Dorsolateral prefrontal cortex (tissue), 120 donors: ENCODE measurements at regions of chr17 and their contacts with region 1.

Region 1: DNA sequence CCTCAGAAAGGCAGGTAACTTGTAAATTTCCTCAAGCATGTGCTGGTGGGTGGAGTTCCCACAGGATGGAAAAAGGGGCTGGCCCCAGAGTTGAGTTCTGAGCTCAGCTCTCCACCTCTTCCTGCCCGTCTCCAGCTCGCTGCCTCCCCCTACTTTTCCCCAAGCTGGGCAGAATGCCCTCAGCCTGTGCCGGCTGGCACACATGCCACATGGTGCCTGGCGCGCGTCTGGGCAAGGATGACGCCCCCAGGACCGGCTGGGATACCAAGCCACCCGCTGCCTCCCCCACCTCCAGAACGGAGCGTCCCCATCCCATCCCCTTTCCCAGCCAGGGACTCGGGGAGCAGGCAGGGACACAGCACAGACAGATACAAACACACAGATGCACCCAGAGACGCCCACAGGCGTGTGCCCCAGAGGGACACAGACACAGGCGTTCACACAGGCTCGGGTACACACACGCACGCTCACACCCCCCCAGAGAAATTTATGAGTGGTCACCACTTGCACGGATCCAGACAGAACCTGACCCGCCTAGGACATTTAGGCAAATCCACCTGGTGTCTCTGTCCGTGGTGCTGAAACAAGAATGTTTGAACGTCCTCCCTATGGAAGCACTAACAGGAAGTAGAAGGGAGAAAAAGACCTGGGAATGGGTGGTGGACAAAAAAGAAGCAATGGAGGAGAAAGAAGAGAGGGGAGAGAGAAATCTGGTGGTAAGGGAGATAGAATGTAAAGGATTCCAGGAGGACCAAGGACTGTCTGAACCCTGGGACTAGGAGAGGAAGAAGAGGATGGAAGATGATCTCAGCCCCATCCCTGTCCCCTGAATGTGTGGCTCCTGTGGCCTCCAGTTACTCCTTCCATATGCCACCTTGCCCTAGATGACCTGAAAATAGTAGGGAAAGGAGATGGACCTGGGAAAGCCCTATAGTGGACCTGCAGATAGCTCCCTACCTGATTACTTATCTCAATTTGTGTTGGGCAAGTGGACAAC is 15.5 kb downstream of the NEUROD2 start:
- DNase-seq: peak in 8 of 10 donors; percentile 61 to 83 (median 76)
- H3K4me3 ChIP-seq: no peak overlapping the region
- H3K27ac ChIP-seq: peak overlapping the region in 23 of 59 donors; percentile 7 to 82 (median 38)
- H3K27me3 ChIP-seq: peaks cover 0 to 35% (median 22%) of the 10 kb centered on the region in 45 donors
- CTCF ChIP-seq: no peak

Region 2: DNA sequence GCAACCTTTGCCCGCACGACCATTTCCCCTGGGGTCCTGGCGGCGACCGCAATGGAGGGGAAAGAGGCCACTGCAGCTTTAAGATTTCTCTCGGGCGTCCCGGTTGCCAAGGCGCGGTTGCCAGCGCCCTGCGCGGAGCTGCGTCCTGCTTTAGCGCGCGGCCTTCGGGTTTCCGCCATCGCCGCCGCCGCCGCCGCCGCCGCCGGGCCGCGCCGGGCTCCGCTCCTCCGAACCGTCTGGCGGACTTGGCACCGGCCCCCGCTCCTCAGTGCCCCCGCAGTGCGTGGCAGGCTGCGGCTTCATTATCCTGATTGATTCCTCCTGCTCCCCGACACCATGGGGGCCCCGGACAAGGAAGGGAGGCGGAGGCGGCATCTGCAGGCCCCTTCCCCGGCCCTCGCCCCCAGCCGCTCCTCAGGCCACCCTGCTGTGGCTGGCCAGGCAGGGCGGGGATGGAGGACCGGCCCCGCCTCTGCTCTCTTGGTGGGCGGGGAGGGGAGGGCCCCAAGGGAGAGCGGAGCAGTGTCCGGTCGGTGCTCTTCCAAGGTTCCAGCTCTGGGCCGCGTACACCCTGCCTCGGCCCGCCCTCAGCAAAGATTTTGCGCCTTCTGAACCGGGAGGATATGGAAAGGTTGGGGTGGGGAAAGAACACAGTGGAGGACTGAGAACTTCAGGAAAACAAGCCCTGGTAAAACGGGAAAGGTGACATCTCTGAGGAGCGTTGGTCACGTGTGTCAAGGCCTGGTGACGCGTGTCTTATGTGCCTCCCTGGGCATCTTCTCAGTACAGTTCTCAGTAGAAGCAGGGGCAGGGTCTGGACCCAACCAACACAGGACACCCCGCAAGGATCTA is 18.6 kb before region 1 on chr17:
- intact Hi-C with region 1: loop called in 1 of 2 experiments (anchors 1 kb)
- DNase-seq: peak in 8 of 10 donors; percentile 31 to 79 (median 67)
- H3K4me3 ChIP-seq: peak overlapping the region; percentile 51 to 82 (median 69)
- H3K27ac ChIP-seq: peak overlapping the region in 57 of 59 donors; percentile 41 to 94 (median 84)
- H3K27me3 ChIP-seq: no peaks in the 10 kb centered on the region
- CTCF ChIP-seq: peak in 2 of 56 donors; percentile 12 to 16